ENCODE measurements at regions of chr9 and their contacts with region 1.

Region 1: DNA sequence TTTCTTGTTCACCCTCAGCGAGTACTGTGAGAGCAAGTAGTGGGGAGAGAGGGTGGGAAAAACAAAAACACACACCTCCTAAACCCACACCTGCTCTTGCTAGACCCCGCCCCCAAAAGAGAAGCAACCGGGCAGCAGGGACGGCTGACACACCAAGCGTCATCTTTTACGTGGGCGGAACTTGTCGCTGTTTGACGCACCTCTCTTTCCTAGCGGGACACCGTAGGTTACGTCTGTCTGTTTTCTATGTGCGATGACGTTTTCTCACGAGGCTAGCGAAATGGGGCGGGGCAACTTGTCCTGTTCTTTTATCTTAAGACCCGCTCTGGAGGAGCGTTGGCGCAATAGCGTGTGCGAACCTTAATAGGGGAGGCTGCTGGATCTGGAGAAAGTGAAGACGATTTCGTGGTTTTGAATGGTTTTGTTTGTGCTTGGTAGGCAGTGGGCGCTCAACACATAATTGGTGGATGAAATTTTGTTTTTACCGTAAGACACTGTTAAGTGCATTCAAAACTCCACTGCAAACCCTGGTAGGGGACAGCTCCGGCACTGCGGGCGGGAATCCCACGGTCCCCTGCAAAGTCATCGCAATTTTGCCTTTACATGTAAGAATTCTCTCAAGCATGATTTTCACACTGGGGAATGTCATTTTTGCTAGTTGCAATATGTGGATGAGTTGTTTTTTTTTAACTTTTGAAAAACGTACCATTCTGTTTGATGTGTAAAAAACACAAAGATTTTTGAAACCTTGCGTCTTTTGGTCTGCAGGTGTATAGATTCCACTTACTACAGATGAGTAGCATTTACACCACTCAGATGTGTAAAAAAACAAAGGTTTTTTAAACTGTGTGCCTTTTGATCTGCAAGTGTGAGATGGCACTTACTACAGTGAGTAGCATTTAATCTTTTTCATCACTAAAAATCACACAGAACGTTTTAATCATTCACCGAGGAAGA is 631 bp upstream of the C9orf72 start:
- DNase-seq: peak; percentile 94
- H3K4me3 Mint-ChIP-seq: peak overlapping the region; percentile 90
- H3K27ac Mint-ChIP-seq: peak overlapping the region; percentile 100
- H3K4me1 Mint-ChIP-seq: peaks cover 30% of the 10 kb centered on the region
- H3K27me3 Mint-ChIP-seq: peaks cover 12% of the 10 kb centered on the region

Region 2: DNA sequence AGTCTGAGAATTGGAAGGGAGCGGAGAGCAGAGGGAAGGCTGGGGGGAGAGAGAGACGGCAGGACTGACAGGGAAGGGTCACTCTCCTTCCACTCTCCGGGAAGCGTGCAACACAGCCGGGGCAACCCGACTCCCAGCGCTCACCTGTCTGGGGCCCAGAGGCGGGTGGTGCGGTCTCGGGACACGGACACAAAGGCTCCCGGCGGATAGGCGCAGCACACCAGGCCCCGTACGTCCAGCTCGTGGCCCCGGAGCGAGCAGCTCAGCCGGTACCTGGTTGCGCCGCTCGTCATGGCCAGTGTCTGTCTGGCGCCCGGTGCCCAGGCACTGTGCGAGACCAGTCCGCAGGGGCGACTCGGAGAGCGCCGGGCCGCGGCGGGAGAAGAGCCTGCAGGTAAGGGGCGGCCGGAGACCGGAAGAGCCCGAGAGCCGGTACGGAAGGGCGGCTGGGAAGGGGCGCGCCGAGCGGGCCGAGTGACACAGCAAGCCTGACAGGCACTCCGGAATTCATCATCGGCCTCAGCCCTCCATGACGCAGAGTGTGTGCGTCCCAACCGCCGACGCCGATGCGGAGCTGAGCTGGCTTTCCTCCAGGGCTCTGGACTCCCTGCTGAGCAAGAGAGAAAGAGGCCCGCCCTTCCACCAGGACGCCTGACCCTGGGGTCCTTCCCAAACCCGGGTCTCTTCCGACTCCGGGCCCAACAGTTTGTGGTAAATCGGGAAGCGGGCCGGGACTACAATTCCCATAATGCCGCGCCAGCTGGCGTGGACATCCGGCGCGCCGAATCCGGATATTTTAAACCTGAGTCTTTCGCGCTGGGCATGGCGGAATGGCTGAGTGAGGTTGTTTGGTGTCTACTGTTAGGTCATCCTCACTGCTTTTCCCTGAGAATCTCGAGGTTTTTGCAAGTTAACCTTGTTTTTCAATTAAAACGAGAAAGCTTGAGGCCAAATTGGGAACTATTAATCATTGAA is 626.9 kb before region 1 on chr9 and contains the start of gene PLAA:
- intact Hi-C with region 1: loop called (anchors 1 kb)
- DNase-seq: peak; percentile 82
- H3K4me3 Mint-ChIP-seq: peak within 1 kb of the TSS; percentile 95
- H3K27ac Mint-ChIP-seq: peak within 1 kb of the TSS; percentile 100
- H3K4me1 Mint-ChIP-seq: peaks cover 48% of the 10 kb centered on the region
- H3K27me3 Mint-ChIP-seq: no peaks in the 10 kb centered on the region
- total RNA-seq, gene PLAA: 46.9 and 48.6 TPM in 2 replicates

Region 3: DNA sequence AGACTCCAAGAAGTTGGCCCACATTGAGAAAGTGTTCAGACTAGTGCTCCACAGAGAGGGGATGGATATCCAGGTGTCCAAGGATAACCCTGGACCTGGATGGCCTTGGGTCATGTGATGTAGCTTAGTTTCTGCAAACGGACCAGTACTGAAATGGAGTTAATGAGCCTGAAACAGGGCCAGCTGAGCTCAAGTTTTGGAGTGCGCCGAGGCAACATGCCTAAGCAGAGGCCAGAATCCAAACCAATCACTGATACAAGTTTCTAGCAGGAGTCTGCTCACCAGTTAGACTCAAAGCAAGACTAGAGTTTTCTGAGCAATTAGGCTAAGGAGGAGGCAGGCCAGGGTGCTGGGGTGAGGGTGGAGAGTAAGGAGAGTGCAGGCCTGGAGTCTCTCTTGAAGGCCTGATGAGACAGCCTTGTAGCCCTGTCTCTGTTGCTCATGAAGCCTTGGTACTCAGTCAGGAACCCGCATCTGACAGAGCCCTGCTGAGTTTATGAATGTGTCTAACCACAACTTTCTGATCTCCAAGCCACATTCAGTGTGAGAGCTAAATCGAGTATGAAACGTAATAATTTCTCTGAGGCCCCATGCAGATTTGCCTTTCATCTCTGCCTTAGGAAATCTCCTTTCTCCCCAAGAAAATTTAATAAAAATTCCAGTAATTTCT is 208.1 kb before region 1 on chr9:
- intact Hi-C with region 1: loop called (anchors 1 kb)
- DNase-seq: peak; percentile 49
- H3K4me3 Mint-ChIP-seq: peak overlapping the region; percentile 9
- H3K27ac Mint-ChIP-seq: peak overlapping the region; percentile 56
- H3K4me1 Mint-ChIP-seq: peaks cover 32% of the 10 kb centered on the region
- H3K27me3 Mint-ChIP-seq: peaks cover 10% of the 10 kb centered on the region

Region 4: DNA sequence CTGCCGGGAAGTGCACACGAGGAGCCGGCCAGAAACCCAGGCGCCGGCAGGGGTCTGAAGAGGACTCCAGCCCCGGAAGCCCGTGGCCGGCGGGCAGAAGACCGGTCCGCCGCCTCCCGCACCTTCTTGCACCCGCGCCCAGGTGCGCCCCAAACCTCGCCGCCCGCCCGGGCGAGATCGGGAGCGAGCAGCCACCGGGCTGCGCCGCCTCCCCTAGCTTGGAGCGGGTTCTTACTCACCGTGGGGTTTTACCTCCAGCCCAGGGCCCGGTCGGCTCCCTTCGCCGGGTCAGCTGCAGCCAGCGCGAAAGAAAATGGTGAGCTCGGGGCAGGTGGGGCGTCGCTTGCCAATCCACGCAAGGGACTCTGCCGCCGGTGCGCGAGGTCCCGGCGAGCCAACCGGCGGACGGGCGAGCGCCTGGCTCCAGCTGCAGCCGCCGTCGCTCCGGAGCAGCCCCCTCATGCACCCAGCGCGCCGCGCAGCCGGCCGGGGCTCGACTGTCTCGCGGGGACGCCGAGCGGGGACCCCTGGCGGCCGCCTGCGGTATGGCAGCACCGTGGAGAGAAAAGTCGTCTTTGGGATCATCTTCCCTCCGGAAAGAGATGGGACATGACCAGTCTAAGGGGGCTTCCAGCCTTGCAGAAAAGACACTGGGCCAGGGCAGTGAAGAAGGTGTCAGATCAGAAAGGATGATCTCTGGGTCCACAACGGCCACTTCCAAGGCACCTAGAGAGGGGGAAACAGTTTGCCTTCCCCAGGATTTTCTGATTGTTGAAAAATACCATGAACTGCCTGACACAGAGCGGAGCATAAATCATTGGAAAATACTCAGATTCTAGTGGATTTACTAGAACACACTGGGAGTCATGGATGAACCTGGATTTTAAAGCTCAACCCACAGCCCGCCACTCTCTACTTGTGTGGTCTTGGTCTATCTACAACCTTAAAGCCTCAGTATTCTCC is 44.3 kb before region 1 on chr9 and contains the start of gene MOB3B:
- intact Hi-C with region 1: loop called (anchors 1 kb)
- DNase-seq: peak; percentile 66
- H3K4me3 Mint-ChIP-seq: peak within 1 kb of the TSS; percentile 85
- H3K27ac Mint-ChIP-seq: peak within 1 kb of the TSS; percentile 61
- H3K4me1 Mint-ChIP-seq: peaks cover 4% of the 10 kb centered on the region
- H3K27me3 Mint-ChIP-seq: peaks cover 49% of the 10 kb centered on the region
- total RNA-seq, gene MOB3B: 0.17 and 0.26 TPM in 2 replicates

Region 5: GRCh38 chr9:27626244-27627187 is 52.6 kb after region 1 on chr9:
- intact Hi-C with region 1: no loop called
- DNase-seq: no peak
- H3K4me3 Mint-ChIP-seq: no peak overlapping the region
- H3K27ac Mint-ChIP-seq: no peak overlapping the region
- H3K4me1 Mint-ChIP-seq: no peaks in the 10 kb centered on the region
- H3K27me3 Mint-ChIP-seq: peaks cover 5% of the 10 kb centered on the region

Region 6: DNA sequence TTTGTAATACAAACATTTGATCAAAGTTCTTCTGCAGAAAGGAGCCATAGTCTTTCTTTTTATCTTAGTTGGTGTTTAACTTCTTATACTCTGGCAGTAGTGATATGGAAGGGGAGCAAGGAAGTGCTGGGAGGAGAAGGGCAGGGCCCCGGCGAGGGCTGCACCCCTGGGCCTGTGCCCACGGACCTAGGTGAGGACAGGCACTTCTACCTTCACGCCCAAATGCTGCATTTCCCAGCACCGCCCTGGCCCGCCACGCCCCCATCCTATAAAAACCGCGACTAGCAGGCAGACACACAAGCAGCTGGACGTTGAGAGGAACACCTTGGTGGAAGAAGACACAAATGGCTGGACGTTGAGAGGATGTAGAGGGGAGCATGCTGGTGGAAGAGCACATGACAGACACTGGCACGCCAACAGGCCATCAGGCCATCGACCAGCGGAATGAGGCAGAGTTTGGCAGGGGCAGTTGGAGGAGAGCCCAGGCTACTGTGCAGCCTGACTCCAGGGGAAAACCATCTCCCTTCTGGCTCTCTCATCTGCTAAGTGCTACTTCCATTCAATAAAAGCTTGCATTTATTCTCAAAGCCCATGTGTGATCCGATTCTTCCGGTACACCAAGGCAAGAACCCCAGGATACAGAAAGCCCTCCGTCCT is 80.8 kb after region 1 on chr9:
- intact Hi-C with region 1: no loop called
- DNase-seq: no peak
- H3K4me3 Mint-ChIP-seq: no peak overlapping the region
- H3K27ac Mint-ChIP-seq: no peak overlapping the region
- H3K4me1 Mint-ChIP-seq: no peaks in the 10 kb centered on the region
- H3K27me3 Mint-ChIP-seq: no peaks in the 10 kb centered on the region

Region 7: DNA sequence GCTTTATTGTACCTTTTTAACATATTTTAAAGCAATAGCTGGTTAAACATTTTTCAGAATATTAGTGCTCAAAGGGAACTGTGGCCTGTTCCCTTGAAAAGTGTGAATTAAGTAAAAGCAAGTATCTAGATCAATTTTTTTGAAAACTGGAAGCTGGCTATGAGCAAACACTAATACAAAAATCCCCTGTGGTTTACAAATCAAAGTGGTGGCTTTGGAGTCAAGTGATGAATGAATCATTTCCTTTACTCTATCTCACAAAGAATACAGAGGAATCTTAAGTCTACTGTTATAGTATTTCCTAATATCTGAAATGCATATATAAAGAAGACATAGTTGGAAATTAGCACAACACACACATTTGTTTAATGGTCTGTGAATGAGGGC is 211.8 kb after region 1 on chr9:
- intact Hi-C with region 1: loop called (anchors 1 kb)
- DNase-seq: no peak
- H3K4me3 Mint-ChIP-seq: no peak overlapping the region
- H3K27ac Mint-ChIP-seq: peak overlapping the region; percentile 59
- H3K4me1 Mint-ChIP-seq: peaks cover 14% of the 10 kb centered on the region
- H3K27me3 Mint-ChIP-seq: peaks cover 5% of the 10 kb centered on the region

Region 8: DNA sequence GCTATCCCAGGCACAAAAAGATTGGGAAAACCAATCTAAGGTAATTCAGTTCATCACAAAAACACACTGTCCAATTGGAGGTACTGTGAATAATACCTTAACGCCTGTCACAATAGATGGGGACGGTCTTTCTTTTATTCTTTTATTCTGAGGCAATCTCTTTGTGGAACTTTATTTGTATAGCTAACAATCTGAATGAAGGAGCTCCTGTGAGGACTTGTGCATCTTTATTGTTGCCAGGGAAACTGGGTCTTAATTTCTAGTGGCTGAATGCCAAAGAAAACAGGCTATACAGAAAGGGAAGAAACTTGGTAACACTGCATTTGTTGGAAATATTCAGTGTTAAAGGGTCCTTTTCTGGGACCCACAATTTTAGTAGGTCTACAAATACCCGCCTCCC is 546.3 kb after region 1 on chr9:
- intact Hi-C with region 1: no loop called
- DNase-seq: no peak
- H3K4me3 Mint-ChIP-seq: no peak overlapping the region
- H3K27ac Mint-ChIP-seq: no peak overlapping the region
- H3K4me1 Mint-ChIP-seq: no peaks in the 10 kb centered on the region
- H3K27me3 Mint-ChIP-seq: no peaks in the 10 kb centered on the region

Measured in activated T-helper 1 cell treated with anti-CD3 and anti-CD28 coated beads, Interleukin-12 subunit alpha, Interleukin-12 subunit beta, Interleukin-2, Interleukin-4 antibody, amounts not matched to agents 30 ng/mL and 10 ng/mL and 1 ng/mL, durations not matched to agents 14 hours and 24 hours and 36 hours (primary cell).